GM13977 (cell line): ENCODE measurements at regions of chr1 and their contacts with region 1.

Region 1: DNA sequence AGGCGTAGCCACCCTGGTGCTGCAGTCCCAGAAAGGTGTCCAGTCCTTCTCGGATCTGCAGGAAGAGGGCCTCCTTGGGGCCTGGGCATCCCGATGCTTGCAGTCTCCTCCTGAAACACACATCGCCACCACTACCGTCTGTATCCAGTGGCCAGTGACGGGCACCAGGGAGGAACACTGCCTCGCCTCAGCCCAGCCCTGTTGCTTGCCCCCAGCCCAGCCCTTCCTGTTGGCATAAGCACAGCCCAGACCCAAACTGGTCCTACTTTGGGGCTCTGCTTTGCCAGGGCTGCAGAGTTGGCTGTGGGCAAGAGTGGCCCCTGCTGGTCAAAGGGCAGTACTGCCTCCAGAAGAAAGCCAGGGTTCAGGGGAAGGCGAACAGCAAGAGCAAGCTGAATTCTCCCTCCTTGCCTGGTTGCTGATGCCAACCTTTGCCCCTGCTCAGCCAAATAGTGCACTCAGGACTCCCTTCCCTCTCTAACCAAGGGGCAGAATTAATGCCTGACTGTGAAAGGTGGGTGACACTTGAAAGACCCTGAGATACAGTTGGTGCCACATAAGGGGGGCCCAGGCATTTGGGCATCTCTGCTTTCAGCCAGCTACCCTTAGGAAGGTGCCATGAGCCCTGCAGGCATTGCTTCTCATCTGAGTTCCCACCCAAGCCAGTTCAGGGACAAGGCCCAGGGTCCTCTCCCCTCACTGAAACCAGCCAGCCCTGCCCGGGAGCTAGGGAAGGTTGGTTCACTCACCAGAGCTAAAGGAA is 11.1 kb upstream of the ARHGEF2 start:
- DNase-seq: peak; percentile 82
- CTCF ChIP-seq: peak; percentile 99

Region 2: DNA sequence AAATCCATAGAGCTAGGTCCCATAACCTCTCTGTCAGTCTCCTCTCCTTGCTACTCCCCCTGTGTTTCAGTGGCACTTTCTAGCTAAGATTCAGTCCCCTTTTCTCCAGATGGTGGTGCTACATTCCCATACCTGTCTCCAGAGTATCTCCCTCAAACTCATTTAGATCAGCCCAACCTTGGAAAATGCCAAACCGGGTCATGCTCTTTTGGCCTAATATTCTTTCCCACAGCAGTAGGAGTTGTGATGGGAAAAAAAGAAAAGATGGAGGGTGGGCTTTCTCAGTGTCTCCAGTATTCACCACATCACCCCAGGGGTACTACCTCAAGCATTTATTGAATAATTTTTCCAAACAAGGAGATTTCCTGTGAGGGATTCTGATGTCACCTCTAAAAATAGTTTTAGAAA is 51.2 kb before region 1 on chr1:
- in situ Hi-C with region 1: loop called (anchors 5 kb)
- DNase-seq: peak; percentile 73
- CTCF ChIP-seq: peak; percentile 80

Region 3: DNA sequence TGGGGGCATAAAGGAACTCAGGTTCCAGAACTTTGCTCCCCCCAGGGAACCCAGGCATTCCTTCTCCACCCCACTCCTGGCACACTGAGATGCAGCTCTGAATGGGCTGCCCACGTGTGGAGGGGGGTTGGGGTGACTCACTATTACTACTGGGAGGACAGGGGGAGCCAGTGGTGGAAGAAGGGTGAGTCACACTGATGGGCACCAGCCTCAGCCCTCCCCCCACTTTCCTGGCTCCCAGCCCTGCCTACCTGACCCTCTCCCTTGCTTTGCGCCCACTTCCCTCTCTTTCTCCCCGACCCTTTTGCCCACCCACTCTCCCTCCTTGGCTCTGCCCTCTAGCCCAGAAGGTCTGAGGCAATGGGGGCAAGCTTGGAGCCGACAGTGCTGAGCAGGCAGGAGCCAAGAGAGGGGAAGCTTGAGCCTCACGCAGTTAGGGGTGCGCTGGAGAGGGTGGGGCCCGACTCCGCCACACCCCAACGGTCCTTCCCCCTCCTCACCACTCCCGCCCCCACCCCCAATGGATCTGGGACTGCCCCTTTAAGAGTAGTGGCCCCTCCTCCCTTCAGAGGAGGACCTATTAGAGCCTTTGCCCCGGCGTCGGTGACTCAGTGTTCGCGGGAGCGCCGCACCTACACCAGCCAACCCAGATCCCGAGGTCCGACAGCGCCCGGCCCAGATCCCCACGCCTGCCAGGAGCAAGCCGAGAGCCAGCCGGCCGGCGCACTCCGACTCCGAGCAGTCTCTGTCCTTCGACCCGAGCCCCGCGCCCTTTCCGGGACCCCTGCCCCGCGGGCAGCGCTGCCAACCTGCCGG is 124.9 kb after region 1 on chr1 and contains the start of gene LMNA:
- in situ Hi-C with region 1: no loop called
- DNase-seq: peak; percentile 85
- CTCF ChIP-seq: no peak